GM18951 (cell line): ENCODE measurements at regions of chr4 and their contacts with region 1.

Region 1: GRCh38 chr4:38119668-38120385 is 159.6 kb downstream of the PTTG2 start:
- POLR2A ChIP-seq: no peak

Region 2: DNA sequence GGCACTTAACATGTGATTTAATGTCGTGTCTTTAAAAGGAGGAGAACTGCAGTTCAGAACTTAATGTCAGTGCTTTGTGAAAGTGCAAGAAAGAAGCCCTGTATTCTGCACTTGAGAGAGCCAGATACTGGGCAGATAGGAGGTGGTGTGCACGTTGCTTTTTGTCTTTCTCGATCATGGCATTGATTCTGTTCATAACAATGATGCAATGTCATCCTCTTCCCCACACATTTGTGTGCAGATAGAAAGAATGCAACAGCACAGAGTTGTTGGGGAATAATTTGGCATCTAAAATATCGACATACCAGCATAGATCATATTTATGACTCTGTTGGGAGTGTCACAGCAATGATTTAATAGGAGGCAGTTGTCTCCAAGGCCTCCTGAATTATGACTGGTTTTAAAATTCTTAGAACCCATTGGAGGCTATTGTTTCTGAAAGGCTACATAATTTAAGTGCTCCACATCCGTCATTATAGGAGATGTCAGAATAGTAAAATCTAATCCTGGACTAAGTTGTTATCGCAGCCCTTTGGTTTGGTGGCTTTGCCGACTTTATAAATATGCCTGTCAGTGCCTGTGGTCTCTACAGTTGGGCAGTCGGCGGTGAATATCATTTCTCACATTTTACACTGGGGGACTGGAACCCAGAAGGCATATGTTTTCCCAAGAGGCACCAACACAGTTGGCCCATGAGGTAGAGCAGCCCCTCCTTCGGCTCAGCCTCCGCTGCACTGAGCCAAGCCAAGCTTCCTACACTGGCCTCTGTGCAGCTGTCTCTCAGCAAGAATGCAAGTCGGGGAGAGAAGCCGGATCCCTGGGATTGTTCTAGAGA is 34.7 kb before region 1 on chr4:
- in situ Hi-C with region 1: loop called (anchors 5 kb)
- POLR2A ChIP-seq: no peak

Region 3: GRCh38 chr4:38179690-38180377 is 60.0 kb after region 1 on chr4:
- in situ Hi-C with region 1: no loop called
- POLR2A ChIP-seq: no peak